Activated CD4-positive, alpha-beta T cell treated with anti-CD3 and anti-CD28 coated beads, Interleukin-2, amount 10 ng/mL, durations not matched to agents 24 days and 14 days (primary cell): ENCODE measurements at regions of chr14 and their contacts with region 1.

Region 1: GRCh38 chr14:89416002-89416995 is 734 bp downstream of the FOXN3 start:
- DNase-seq: peak; percentile 100
- H3K4me3 Mint-ChIP-seq: peak overlapping the region; percentile 98
- H3K27ac Mint-ChIP-seq: peak overlapping the region; percentile 95
- H3K4me1 Mint-ChIP-seq: peaks cover 40% of the 10 kb centered on the region
- H3K27me3 Mint-ChIP-seq: no peaks in the 10 kb centered on the region

Region 2: DNA sequence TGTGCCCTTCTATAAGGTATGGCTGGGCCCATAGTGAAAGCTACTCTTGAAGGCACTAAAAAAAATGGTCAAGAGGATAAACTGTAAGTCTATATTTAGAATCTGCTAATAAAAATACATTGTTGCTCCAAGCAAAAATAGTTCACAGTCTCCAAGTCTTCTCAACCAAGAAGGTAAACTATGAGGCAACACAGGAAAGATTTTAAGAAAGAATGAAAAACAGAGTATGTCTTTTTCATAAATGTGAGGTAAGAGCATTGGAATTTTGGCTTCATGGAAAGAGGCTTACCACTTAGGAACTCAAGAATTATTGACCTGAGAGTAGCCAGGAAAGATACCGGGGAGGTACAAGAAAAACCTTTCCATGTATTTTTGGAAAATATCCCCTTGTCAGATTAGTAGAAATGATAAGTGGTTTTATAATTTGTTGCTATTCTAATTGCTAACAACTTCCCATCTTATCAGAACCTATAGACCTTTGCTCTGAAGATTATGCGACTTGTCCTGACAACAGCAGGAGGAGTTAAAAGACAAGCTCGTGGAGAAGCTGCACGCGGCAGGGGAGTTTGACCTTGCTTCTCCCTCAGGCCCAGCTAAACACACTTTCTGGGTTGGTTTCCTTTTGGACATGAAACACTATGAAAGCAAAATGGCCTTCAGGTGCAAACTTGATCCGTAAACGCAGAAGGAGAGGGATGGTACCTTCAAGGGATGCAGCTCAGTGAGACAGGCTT is 237.3 kb before region 1 on chr14:
- intact Hi-C with region 1: loop called (anchors 1 kb)
- DNase-seq: no peak
- H3K4me3 Mint-ChIP-seq: no peak overlapping the region
- H3K27ac Mint-ChIP-seq: no peak overlapping the region
- H3K4me1 Mint-ChIP-seq: peaks cover 5% of the 10 kb centered on the region
- H3K27me3 Mint-ChIP-seq: no peaks in the 10 kb centered on the region

Region 3: DNA sequence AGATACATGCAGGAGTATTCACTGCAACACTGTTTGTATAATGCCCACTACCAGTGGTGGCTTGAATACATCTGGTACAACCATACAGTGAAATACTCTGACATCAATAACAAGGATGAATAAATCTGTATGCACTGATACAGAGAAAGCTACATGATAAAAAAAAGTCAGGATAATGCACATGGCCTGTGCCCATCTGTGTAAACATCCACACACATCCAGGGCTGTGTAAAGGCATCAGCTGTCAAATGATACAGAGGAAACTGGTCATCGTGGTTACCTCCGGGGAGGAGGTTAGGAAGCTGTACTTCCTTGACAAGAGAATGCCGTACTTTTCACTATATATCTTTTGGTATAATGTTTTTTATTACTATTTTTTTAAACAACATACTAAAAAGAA is 175.9 kb before region 1 on chr14:
- intact Hi-C with region 1: no loop called
- DNase-seq: peak; percentile 65
- H3K4me3 Mint-ChIP-seq: no peak overlapping the region
- H3K27ac Mint-ChIP-seq: no peak overlapping the region
- H3K4me1 Mint-ChIP-seq: peaks cover 22% of the 10 kb centered on the region
- H3K27me3 Mint-ChIP-seq: no peaks in the 10 kb centered on the region

Region 4: DNA sequence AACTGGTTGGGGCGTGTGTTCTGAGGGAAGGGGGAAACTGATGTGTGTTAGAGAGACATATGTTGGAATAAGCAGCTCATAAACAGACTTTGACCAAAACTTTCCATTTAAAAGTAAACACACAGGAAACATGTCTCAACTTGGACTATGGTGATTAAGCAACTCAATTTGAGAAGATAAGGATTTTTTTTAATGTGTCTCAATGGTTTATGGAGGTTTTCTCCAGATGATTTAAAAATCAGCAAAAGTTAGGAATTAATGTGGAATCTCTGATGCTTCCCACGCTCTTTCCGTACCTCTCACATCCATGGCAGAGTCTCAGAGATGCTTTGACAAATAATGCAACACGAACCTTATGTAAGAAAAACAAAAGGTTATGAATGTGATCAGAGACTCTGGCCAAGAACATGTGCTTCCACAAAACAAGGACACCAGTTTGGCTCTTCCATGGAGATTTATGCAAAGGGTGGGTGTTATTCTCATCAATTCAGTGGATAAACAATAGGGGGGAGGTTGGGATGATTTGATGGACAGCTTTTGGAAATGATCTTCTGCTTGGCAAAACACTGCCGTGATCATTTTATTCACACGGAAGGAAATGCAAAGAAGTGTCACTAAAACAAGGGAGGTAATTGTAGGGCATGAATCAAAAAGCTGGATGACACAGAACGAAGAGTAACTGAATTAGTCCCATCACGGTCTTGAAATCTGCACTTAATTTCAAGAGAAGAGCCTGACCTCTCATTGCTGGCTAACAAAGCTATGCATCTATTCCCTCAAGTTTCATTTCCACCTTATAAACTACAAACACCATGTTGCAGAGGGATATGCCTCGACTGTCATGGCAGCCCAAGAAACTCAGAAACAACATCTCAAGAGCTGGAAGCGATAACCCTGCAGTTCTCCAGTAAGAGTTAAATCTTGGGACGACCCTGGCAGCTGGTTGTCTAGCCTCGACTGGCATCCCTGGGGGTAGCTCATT is 75.8 kb before region 1 on chr14:
- intact Hi-C with region 1: loop called (anchors 1 kb)
- DNase-seq: no peak
- H3K4me3 Mint-ChIP-seq: no peak overlapping the region
- H3K27ac Mint-ChIP-seq: peak overlapping the region; percentile 70
- H3K4me1 Mint-ChIP-seq: peaks cover 28% of the 10 kb centered on the region
- H3K27me3 Mint-ChIP-seq: no peaks in the 10 kb centered on the region

Region 5: GRCh38 chr14:89399594-89400068 is 16.7 kb before region 1 on chr14:
- intact Hi-C with region 1: no loop called
- DNase-seq: no peak
- H3K4me3 Mint-ChIP-seq: no peak overlapping the region
- H3K27ac Mint-ChIP-seq: no peak overlapping the region
- H3K4me1 Mint-ChIP-seq: peaks cover 40% of the 10 kb centered on the region
- H3K27me3 Mint-ChIP-seq: no peaks in the 10 kb centered on the region

Region 6: GRCh38 chr14:89445273-89445973 is 29.1 kb after region 1 on chr14:
- intact Hi-C with region 1: loop called (anchors 1 kb)
- DNase-seq: peak; percentile 71
- H3K4me3 Mint-ChIP-seq: peak overlapping the region; percentile 55
- H3K27ac Mint-ChIP-seq: peak overlapping the region; percentile 85
- H3K4me1 Mint-ChIP-seq: peaks cover 44% of the 10 kb centered on the region
- H3K27me3 Mint-ChIP-seq: no peaks in the 10 kb centered on the region

Region 7: DNA sequence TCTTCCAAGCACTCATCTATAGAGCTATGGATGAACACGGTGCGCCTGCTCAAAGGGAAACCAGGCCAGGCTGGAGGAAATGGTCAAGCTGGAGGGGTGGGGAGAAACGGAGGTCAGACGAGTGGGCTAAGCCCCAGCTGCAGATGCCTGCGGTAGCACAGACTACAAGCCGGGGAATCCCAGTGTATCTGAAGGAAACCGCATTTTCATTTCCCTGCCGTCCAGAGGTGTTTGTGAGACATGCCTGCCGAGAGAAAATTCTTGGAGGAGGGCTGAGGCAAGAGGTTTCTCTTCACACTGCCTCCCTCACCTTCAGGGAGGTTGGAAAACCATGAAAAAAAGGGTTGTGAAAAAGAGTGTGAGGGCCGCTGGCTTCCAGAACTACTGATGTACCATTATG is 102.7 kb after region 1 on chr14:
- intact Hi-C with region 1: no loop called
- DNase-seq: no peak
- H3K4me3 Mint-ChIP-seq: no peak overlapping the region
- H3K27ac Mint-ChIP-seq: no peak overlapping the region
- H3K4me1 Mint-ChIP-seq: peaks cover 15% of the 10 kb centered on the region
- H3K27me3 Mint-ChIP-seq: no peaks in the 10 kb centered on the region

Region 8: GRCh38 chr14:89701211-89702043 is 285.1 kb after region 1 on chr14:
- intact Hi-C with region 1: loop called (anchors 1 kb)
- DNase-seq: peak; percentile 95
- H3K4me3 Mint-ChIP-seq: peak overlapping the region; percentile 76
- H3K27ac Mint-ChIP-seq: peak overlapping the region; percentile 88
- H3K4me1 Mint-ChIP-seq: peaks cover 34% of the 10 kb centered on the region
- H3K27me3 Mint-ChIP-seq: no peaks in the 10 kb centered on the region

Region 9: GRCh38 chr14:89954070-89955028 is 538.0 kb after region 1 on chr14 and contains the start of gene EFCAB11:
- intact Hi-C with region 1: loop called (anchors 2 kb)
- DNase-seq: peak; percentile 99
- H3K4me3 Mint-ChIP-seq: peak within 1 kb of the TSS; percentile 90
- H3K27ac Mint-ChIP-seq: peak within 1 kb of the TSS; percentile 90
- H3K4me1 Mint-ChIP-seq: peaks cover 40% of the 10 kb centered on the region
- H3K27me3 Mint-ChIP-seq: no peaks in the 10 kb centered on the region
- total RNA-seq, gene EFCAB11: 6.8 and 7.8 TPM in 2 replicates